Activated CD8-positive, alpha-beta T cell treated with anti-CD3 and anti-CD28 coated beads for 36 hours (primary cell): ENCODE measurements at regions of chr14 and their contacts with region 1.

Region 1: GRCh38 chr14:33792720-33793368 is 158.0 kb downstream of the EGLN3 start:
- DNase-seq: peak; percentile 76
- ATAC-seq: no peak
- H3K4me3 Mint-ChIP-seq: no peak overlapping the region
- H3K27ac Mint-ChIP-seq: no peak overlapping the region
- H3K4me1 Mint-ChIP-seq: peaks cover 7% of the 10 kb centered on the region
- H3K27me3 Mint-ChIP-seq: peaks cover 20% of the 10 kb centered on the region
- CTCF ChIP-seq: peak; percentile 94

Region 2: GRCh38 chr14:32576088-32576795 is 1216.6 kb before region 1 on chr14:
- CTCF ChIA-PET with region 1: interaction called, 22 read pairs
- POLR2A ChIA-PET with region 1: no interaction called
- intact Hi-C with region 1: loop called (anchors 5 kb)
- DNase-seq: peak; percentile 45
- ATAC-seq: peak; percentile 64
- H3K4me3 Mint-ChIP-seq: no peak overlapping the region
- H3K27ac Mint-ChIP-seq: no peak overlapping the region
- H3K4me1 Mint-ChIP-seq: no peaks in the 10 kb centered on the region
- H3K27me3 Mint-ChIP-seq: peaks cover 2% of the 10 kb centered on the region
- CTCF ChIP-seq: peak; percentile 93

Region 3: GRCh38 chr14:32710731-32711680 is 1081.8 kb before region 1 on chr14:
- CTCF ChIA-PET with region 1: interaction called, 4 read pairs
- POLR2A ChIA-PET with region 1: no interaction called
- intact Hi-C with region 1: loop called (anchors 10 kb)
- DNase-seq: peak; percentile 17
- ATAC-seq: no peak
- H3K4me3 Mint-ChIP-seq: no peak overlapping the region
- H3K27ac Mint-ChIP-seq: no peak overlapping the region
- H3K4me1 Mint-ChIP-seq: no peaks in the 10 kb centered on the region
- H3K27me3 Mint-ChIP-seq: no peaks in the 10 kb centered on the region
- CTCF ChIP-seq: peak; percentile 52

Region 4: DNA sequence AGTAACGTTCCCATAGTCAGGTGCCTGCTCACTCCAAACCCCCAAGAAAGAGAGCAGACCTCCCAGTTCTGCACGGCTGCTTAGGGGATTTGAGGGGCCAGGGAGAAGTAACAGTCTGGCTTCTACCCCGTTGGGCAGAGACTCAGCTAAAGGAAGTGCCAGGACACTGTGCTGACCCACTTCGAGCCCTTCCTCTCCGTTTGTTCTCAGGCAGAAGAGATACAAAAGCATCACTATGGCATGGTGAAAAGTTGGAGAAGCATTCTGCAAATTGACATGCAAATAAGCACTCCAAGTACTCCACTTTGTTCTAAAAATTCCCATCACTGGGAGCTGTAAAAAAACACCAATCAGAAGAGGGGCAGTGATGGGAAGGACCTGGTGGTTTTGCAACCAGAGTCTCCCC is 81.0 kb before region 1 on chr14:
- CTCF ChIA-PET with region 1: no interaction called
- POLR2A ChIA-PET with region 1: no interaction called
- intact Hi-C with region 1: no loop called
- DNase-seq: no peak
- ATAC-seq: no peak
- H3K4me3 Mint-ChIP-seq: no peak overlapping the region
- H3K27ac Mint-ChIP-seq: no peak overlapping the region
- H3K4me1 Mint-ChIP-seq: no peaks in the 10 kb centered on the region
- H3K27me3 Mint-ChIP-seq: no peaks in the 10 kb centered on the region
- CTCF ChIP-seq: no peak

Region 5: DNA sequence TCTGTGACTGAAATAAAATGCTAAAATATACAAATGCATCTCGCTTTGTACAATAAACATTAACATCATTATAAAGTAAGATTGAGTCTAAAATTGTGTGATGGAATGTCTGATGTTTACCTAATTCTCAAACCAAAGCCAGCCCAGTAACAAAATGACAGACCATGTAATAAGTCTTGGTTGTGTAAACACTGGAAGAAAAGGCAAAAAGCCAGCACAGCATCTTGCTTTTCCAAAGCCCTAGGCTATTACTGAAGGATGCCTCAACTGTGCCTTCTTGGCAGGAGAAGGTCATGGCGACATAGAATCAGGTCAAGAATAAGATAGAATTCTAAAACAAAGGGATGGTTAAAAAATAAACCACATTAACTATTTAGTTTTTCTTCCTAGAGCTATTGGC is 11.6 kb before region 1 on chr14:
- CTCF ChIA-PET with region 1: interaction called, 29 read pairs
- POLR2A ChIA-PET with region 1: no interaction called
- intact Hi-C with region 1: no loop called
- DNase-seq: no peak
- ATAC-seq: no peak
- H3K4me3 Mint-ChIP-seq: no peak overlapping the region
- H3K27ac Mint-ChIP-seq: no peak overlapping the region
- H3K4me1 Mint-ChIP-seq: no peaks in the 10 kb centered on the region
- H3K27me3 Mint-ChIP-seq: peaks cover 4% of the 10 kb centered on the region
- CTCF ChIP-seq: no peak

Region 6: DNA sequence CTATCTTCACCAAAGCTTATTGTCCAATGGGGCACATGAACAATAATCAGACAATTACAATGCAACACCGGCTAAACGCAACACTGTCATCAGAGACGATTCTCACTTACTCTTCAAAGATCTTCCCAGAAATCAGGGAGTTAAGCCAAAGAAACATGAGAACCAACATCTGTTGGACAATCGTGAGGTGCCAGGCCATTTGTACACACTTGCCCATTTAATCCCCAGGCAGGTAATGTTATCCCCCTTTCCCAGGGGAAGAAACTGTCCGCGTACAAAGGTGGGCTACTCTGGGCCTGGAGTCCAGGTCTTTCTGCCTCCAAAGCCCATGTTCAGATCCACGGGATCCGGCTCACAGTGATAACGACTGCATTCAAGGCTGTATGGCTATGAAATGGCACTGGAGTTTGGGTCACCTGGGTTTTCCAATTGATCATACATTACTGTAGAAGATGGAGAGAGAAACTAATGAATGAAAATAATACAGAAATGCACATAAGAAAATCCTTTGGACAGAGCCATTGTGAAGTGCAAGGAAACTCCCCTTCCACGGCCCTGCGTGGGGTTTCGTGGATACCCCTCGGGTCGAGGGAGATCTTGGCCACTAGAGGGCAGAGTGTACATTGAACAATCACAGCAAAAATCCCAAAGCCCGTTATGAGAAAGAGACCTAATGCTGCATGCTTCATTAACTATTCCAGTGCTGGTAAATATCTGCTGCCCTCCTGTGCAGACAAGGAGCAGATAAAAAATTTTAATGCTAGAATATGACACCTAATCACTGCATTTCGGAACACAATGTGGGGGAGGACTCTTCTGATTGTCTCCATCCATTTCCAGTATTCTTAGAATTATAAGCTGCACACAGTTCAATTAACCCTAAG is 46.6 kb after region 1 on chr14:
- CTCF ChIA-PET with region 1: interaction called, 10 read pairs
- POLR2A ChIA-PET with region 1: no interaction called
- intact Hi-C with region 1: no loop called
- DNase-seq: peak; percentile 68
- ATAC-seq: peak; percentile 55
- H3K4me3 Mint-ChIP-seq: no peak overlapping the region
- H3K27ac Mint-ChIP-seq: no peak overlapping the region
- H3K4me1 Mint-ChIP-seq: no peaks in the 10 kb centered on the region
- H3K27me3 Mint-ChIP-seq: peaks cover 2% of the 10 kb centered on the region
- CTCF ChIP-seq: peak; percentile 75